ENCODE measurements at regions of chr19 and their contacts with region 1.

Region 1: DNA sequence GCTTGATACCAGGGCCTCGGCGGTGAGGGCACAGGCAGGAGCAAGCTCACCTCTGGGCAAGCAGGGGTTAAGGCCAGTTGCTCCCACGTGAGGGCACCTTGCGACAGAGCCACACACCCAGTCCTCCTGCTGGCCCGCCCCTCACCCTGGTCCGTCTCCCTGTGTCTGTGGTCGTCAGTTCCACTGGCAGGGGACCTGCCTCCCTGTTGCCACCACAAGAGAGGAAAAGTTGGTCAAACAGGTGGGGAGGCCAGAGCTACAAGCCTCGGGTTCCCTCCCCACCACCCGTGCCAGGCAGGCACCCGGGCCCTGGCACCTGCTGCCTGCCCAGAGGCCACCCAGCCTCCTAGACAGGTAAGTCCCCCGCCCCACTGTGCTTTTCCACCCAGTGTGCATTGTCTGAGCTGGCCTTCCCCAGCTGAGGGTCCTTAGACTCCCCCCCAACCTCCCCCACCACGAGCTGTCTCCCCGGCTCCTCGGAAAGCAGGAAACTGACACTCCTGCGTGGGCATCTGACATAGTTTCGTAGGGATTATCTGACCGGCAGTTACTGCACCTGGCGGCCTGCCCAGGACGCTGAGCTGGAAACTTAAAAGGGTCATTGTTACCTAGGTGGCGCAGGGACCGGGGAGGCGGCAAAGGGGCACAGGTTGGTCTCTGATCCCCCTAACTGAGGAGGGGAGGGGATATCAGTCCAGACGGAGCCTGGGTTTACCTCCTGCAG is at the start of gene TJP3:
- DNase-seq: no peak
- total RNA-seq, gene TJP3: not detected

Region 2: GRCh38 chr19:3550947-3551807 is 157.2 kb before region 1 on chr19:
- intact Hi-C with region 1: loop called (anchors 2 kb)
- DNase-seq: no peak